ENCODE measurements at regions of chr12 and their contacts with region 1.

Region 1: GRCh38 chr12:115752913-115753726 is 524.4 kb downstream of the MED13L start:
- DNase-seq: peak in 6 of 10 donors; percentile 4 to 51 (median 27)
- H3K4me3 ChIP-seq: no peak overlapping the region
- H3K27ac ChIP-seq: no peak overlapping the region
- H3K27me3 ChIP-seq: peaks cover 0 to 80% (median 52%) of the 10 kb centered on the region in 45 donors
- CTCF ChIP-seq: peak; percentile 20 to 94 (median 77)

Region 2: GRCh38 chr12:113973109-113973904 is 1779.8 kb before region 1 on chr12:
- intact Hi-C with region 1: loop called in 1 of 2 experiments (anchors 10 kb)
- DNase-seq: no peak
- H3K4me3 ChIP-seq: no peak overlapping the region
- H3K27ac ChIP-seq: no peak overlapping the region
- H3K27me3 ChIP-seq: peaks cover 0 to 32% (median 8%) of the 10 kb centered on the region in 45 donors
- CTCF ChIP-seq: no peak

Region 3: GRCh38 chr12:114662512-114663177 is 1090.5 kb before region 1 on chr12:
- intact Hi-C with region 1: loop called (anchors 2 to 5 kb)
- DNase-seq: peak; percentile 65 to 88 (median 80)
- H3K4me3 ChIP-seq: no peak overlapping the region
- H3K27ac ChIP-seq: no peak overlapping the region
- H3K27me3 ChIP-seq: peaks cover 6 to 89% (median 53%) of the 10 kb centered on the region in 45 donors
- CTCF ChIP-seq: peak; percentile 73 to 99 (median 97)

Measured in dorsolateral prefrontal cortex (tissue), 120 donors.